ENCODE measurements at regions of chr7 and their contacts with region 1.

Region 1: GRCh38 chr7:48875045-48875916 is 49.1 kb upstream of the CDC14C start:
- DNase-seq: no peak
- H3K4me3 Mint-ChIP-seq: no peak overlapping the region
- H3K27ac Mint-ChIP-seq: no peak overlapping the region
- H3K4me1 Mint-ChIP-seq: no peaks in the 10 kb centered on the region
- H3K27me3 Mint-ChIP-seq: no peaks in the 10 kb centered on the region

Region 2: GRCh38 chr7:48424731-48425130 is 450.6 kb before region 1 on chr7:
- intact Hi-C with region 1: loop called (anchors 10 kb)
- DNase-seq: no peak
- H3K4me3 Mint-ChIP-seq: no peak overlapping the region
- H3K27ac Mint-ChIP-seq: no peak overlapping the region
- H3K4me1 Mint-ChIP-seq: no peaks in the 10 kb centered on the region
- H3K27me3 Mint-ChIP-seq: no peaks in the 10 kb centered on the region